ENCODE measurements at regions of chr11 and their contacts with region 1.

Region 1: DNA sequence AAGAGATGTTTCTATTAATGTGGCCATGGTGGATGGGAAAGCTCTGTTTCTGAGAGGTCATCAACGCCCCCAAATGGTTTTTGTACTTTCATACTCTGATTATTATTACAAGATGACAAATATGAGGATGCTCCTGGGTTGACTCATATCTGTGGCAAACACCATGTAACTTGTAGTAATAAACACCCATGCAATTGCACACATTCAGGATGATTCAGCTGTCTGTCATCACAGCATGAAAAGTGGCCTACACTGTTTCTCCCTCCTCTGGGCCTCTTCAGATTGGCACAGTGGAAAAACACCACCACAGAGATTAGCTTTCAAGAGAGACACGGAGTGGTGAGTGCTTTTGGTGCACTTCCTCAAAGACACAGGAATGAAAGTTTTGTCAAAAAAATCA is 85.4 kb downstream of the MTNR1B start:
- DNase-seq: no peak
- H3K4me3 ChIP-seq: no peak overlapping the region
- H3K27ac ChIP-seq: no peak overlapping the region
- H3K4me1 ChIP-seq: no peaks in the 10 kb centered on the region
- H3K27me3 ChIP-seq: no peaks in the 10 kb centered on the region
- CTCF ChIP-seq: no peak
- EP300 ChIP-seq: no peak
- POLR2A ChIP-seq: no peak

Region 2: DNA sequence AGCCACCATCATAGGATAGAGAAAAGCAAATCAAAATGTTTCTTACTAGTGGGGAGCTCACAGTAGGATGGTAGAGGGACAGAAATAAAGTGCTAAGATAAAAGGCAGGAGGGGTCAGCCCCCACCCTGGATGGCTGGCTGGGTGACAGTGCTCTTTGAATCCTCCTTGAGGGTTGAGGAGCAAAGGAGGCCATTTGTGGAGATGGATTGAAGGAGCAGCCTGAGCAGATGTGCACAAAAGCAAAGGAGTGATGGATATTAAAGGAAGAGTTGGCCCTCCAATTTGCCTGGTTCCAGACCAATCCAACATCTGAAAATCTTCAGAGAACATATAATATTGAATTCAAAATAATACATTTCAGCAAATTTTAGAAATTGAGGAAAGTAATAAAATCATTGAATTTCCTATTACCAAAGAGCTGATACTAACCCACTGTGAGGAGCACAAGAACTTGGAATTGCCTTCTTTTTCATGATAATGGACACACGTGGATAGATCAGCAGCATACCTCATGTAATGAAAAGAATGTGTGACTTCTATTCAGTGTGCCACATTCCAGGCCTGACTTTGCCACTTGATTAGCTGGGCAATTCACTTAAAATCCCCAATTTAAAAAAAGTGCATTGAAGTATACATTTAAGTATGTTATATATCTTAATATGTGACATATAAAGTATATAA is 543.2 kb before region 1 on chr11:
- in situ Hi-C with region 1: no loop called
- intact Hi-C with region 1: no loop called
- DNase-seq: no peak
- H3K4me3 ChIP-seq: no peak overlapping the region
- H3K27ac ChIP-seq: no peak overlapping the region
- H3K4me1 ChIP-seq: no peaks in the 10 kb centered on the region
- H3K27me3 ChIP-seq: no peaks in the 10 kb centered on the region
- CTCF ChIP-seq: no peak
- EP300 ChIP-seq: no peak
- POLR2A ChIP-seq: no peak

Region 3: GRCh38 chr11:93099806-93100205 is 44.9 kb after region 1 on chr11:
- in situ Hi-C with region 1: no loop called
- intact Hi-C with region 1: no loop called
- DNase-seq: no peak
- H3K4me3 ChIP-seq: no peak overlapping the region
- H3K27ac ChIP-seq: no peak overlapping the region
- H3K4me1 ChIP-seq: no peaks in the 10 kb centered on the region
- H3K27me3 ChIP-seq: no peaks in the 10 kb centered on the region
- CTCF ChIP-seq: no peak
- EP300 ChIP-seq: no peak
- POLR2A ChIP-seq: no peak

Region 4: GRCh38 chr11:93267383-93267782 is 212.5 kb after region 1 on chr11:
- in situ Hi-C with region 1: no loop called
- intact Hi-C with region 1: no loop called
- DNase-seq: no peak
- H3K4me3 ChIP-seq: no peak overlapping the region
- H3K27ac ChIP-seq: no peak overlapping the region
- H3K4me1 ChIP-seq: no peaks in the 10 kb centered on the region
- H3K27me3 ChIP-seq: no peaks in the 10 kb centered on the region
- CTCF ChIP-seq: no peak
- EP300 ChIP-seq: no peak
- POLR2A ChIP-seq: no peak

Region 5: DNA sequence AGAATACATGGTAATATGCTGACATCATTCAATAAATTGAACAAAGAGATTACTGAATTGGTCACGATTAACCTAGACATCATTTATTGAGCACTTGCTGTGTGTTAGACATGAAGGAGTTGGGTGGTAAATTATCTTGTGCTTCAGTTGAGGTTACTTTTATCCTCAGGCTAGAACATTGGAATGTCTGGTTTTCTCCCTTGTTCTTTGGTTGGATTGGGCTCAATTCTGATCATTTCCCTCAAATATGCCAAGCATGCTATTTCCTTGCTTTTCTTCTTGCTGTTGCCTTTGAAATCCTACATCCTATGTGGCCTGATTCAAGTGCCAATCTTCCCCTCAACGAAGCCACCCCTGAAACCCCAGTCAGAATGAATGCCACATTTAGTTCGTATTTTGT is 341.4 kb after region 1 on chr11:
- in situ Hi-C with region 1: no loop called
- intact Hi-C with region 1: loop called (anchors 10 kb)
- DNase-seq: no peak
- H3K4me3 ChIP-seq: no peak overlapping the region
- H3K27ac ChIP-seq: no peak overlapping the region
- H3K4me1 ChIP-seq: no peaks in the 10 kb centered on the region
- H3K27me3 ChIP-seq: no peaks in the 10 kb centered on the region
- CTCF ChIP-seq: no peak
- EP300 ChIP-seq: no peak
- POLR2A ChIP-seq: no peak